PC-9 (cell line): ENCODE measurements at regions of chr2 and their contacts with region 1.

Region 1: DNA sequence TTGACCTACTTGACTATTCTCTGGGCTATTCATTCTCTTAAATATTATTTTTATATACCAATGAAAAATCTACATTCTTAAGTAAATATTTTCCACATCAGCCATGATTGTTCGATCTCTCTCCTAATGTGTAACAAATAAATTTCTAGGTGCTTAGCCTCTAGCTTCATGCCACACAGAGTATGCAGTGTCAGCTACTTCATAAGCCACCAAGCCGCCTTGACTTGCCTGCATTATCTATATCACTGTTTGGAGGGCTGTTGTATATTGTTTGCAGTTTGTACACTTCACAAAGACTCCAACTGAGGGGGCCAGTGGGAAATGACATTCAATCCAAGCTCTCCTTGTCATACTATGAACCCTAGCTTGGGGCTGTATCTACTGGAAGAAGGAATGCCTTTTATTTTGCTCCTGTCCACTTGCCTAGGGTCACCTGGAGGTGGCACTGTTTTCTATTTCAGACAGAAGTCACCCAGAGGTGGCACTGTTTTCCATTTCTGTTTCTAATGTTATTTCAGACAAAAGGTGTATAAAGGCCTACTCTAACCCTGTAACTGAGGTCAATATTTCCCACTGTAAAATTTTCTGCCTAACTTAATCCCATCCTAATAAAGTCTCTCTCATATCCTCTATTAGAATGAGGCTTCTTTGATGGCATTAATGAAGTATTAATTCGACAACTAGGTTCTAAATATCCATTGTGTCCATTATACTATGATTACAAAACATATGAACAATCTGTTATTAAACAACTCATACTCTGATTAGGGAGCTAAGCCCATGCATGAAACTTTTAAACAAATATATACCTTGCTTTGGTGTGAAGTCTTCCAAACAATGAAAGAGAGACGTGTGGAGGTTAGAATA is 36.4 kb downstream of the COL5A2 start:
- DNase-seq: peak in 1 of 2 experiments; percentile 5
- H3K4me3 ChIP-seq: no peak overlapping the region
- H3K27ac ChIP-seq: no peak overlapping the region
- H3K4me1 ChIP-seq: no peaks in the 10 kb centered on the region
- H3K27me3 ChIP-seq: no peaks in the 10 kb centered on the region
- CTCF ChIP-seq: peak; percentile 65

Region 2: GRCh38 chr2:189287982-189288521 is 144.9 kb after region 1 on chr2:
- CTCF ChIA-PET with region 1: no interaction called
- POLR2A ChIA-PET with region 1: no interaction called
- intact Hi-C with region 1: loop called (anchors 1 kb)
- DNase-seq: no peak
- H3K4me3 ChIP-seq: no peak overlapping the region
- H3K27ac ChIP-seq: no peak overlapping the region
- H3K4me1 ChIP-seq: no peaks in the 10 kb centered on the region
- H3K27me3 ChIP-seq: no peaks in the 10 kb centered on the region
- CTCF ChIP-seq: peak; percentile 58; the same call in 1 of the 2 replicates

Region 3: DNA sequence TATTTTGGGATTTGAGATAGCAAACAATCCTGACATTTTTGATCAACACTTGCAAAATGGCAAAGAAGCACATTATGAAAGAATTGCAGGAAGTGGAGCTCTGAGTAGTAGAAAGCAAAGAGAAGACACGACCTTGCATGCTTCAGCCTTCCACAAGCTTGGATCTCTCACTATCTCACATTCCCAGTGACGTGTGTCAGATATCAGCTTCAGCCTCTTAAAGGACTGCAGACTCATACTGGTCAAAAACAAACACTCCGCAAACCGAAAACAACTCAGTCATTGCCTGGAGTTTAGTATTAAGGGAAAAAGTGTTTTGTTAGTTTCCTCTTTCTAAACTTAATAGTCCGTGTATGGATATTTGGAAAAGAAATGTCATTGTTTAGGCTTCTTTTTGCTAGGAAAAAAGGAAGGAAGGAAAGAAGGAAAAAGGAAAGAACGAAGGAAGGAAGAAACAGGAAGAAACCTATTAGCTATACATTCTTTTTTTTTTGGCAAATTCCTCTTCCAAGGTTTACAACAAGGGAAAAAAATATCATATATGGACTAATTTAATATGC is 470.0 kb after region 1 on chr2:
- CTCF ChIA-PET with region 1: no interaction called
- POLR2A ChIA-PET with region 1: interaction called, 10 read pairs
- intact Hi-C with region 1: no loop called
- DNase-seq: peak; percentile 13 to 69
- H3K4me3 ChIP-seq: peak overlapping the region; percentile 8; the same call in 1 of the 2 replicates
- H3K27ac ChIP-seq: peak overlapping the region; percentile 43; the same call in 1 of the 2 replicates
- H3K4me1 ChIP-seq: 0 out of 2 replicates have a peak, but pooled peaks cover 10% of the 10 kb centered on the region
- H3K27me3 ChIP-seq: no peaks in the 10 kb centered on the region
- CTCF ChIP-seq: no peak